ENCODE measurements at regions of chr3 and their contacts with region 1.

Region 1: GRCh38 chr3:111859974-111860859 is 1.2 kb downstream of the PHLDB2 start:
- DNase-seq: peak; percentile 87
- H3K4me3 ChIP-seq: peak overlapping the region; percentile 71 to 80
- H3K27ac ChIP-seq: peak overlapping the region; percentile 90 to 93
- H3K4me1 ChIP-seq: no peaks in the 10 kb centered on the region
- H3K27me3 ChIP-seq: no peaks in the 10 kb centered on the region
- CTCF ChIP-seq: peak in 3 of 4 experiments; percentile 39 to 74 (median 66)
- POLR2A ChIP-seq: peak; percentile 68

Region 2: GRCh38 chr3:111717601-111718000 is 142.6 kb before region 1 on chr3:
- intact Hi-C with region 1: loop called (anchors 1 kb)
- DNase-seq: peak; percentile 86
- H3K4me3 ChIP-seq: no peak overlapping the region
- H3K27ac ChIP-seq: no peak overlapping the region
- H3K4me1 ChIP-seq: no peaks in the 10 kb centered on the region
- H3K27me3 ChIP-seq: no peaks in the 10 kb centered on the region
- CTCF ChIP-seq: peak; percentile 74 to 97 (median 96)
- POLR2A ChIP-seq: no peak

Region 3: DNA sequence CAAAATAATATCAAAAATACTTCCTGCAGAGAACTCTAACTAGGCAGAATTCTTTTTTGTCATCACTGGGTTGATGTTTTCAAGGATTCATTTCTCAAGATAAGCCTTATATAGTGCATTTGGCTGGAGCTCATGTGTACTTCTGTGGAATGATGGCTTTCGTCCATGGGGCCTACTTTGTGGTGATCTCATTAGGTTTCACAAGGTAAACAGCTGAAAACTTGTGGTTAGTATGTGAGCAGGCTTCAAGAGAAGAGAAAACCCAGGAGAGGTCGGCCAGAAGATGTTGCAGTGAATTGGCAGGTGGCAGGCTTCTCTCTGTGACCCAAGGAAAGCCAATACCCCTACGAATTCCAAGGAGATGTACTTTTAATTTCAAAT is 122.5 kb before region 1 on chr3:
- intact Hi-C with region 1: loop called (anchors 5 kb)
- DNase-seq: peak; percentile 88
- H3K4me3 ChIP-seq: no peak overlapping the region
- H3K27ac ChIP-seq: peak overlapping the region; percentile 52 to 64
- H3K4me1 ChIP-seq: peaks cover 12% of the 10 kb centered on the region
- H3K27me3 ChIP-seq: no peaks in the 10 kb centered on the region
- CTCF ChIP-seq: no peak
- POLR2A ChIP-seq: no peak

Region 4: DNA sequence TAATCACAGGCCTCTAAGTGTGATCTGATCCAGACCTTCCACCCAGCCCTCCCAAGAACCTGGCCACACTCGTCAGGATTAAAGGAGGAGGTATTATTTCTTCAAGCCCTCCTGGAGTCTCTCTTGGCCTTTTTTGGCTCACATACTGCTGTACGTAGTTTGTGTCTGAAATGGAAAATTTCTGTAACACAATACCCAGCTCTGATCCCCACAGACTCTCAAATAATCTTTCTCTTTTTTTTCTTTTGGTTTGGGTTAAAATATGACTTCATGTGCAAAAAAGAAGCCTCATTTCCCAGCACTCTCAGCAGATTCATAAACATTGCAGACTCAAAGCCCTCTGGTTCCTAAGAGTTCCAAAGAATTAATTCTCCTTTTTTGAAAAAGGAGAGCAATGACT is 97.7 kb before region 1 on chr3:
- intact Hi-C with region 1: loop called (anchors 2 kb)
- DNase-seq: no peak
- H3K4me3 ChIP-seq: no peak overlapping the region
- H3K27ac ChIP-seq: peak overlapping the region; percentile 70 to 73
- H3K4me1 ChIP-seq: peaks cover 4% of the 10 kb centered on the region
- H3K27me3 ChIP-seq: no peaks in the 10 kb centered on the region
- CTCF ChIP-seq: no peak
- POLR2A ChIP-seq: no peak

Region 5: DNA sequence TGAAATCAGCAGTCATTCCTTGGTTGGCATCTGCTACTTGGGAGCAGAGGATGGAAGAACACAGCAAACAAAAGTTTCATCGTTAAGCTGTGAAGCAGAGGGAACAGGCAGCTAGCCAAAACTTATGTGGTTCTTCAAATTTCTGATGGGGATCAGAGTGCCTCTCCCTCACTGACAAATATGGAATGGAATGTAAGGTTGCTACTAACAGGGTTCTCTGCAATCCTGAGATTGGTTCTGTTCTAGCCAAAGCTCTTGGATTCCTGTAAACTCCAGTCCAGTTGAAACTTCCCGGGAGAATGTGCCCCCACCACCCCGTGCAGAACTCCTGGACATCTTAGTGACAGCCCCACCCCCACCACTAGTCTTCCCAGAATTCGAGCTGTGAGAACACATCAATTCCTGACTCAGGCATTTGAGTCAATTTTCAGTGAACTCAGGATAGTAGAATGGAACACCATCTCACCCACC is 57.1 kb before region 1 on chr3:
- intact Hi-C with region 1: loop called (anchors 5 kb)
- DNase-seq: peak; percentile 61
- H3K4me3 ChIP-seq: no peak overlapping the region
- H3K27ac ChIP-seq: peak overlapping the region; percentile 27 to 48
- H3K4me1 ChIP-seq: no peaks in the 10 kb centered on the region
- H3K27me3 ChIP-seq: no peaks in the 10 kb centered on the region
- CTCF ChIP-seq: no peak
- POLR2A ChIP-seq: no peak

Region 6: GRCh38 chr3:111967651-111968274 is 107.5 kb after region 1 on chr3:
- intact Hi-C with region 1: loop called (anchors 2 kb)
- DNase-seq: peak; percentile 82
- H3K4me3 ChIP-seq: no peak overlapping the region
- H3K27ac ChIP-seq: no peak overlapping the region
- H3K4me1 ChIP-seq: no peaks in the 10 kb centered on the region
- H3K27me3 ChIP-seq: no peaks in the 10 kb centered on the region
- CTCF ChIP-seq: peak; percentile 82 to 89 (median 86)
- POLR2A ChIP-seq: no peak

Region 7: GRCh38 chr3:112489674-112490479 is 629.7 kb after region 1 on chr3:
- intact Hi-C with region 1: no loop called
- DNase-seq: no peak
- H3K4me3 ChIP-seq: no peak overlapping the region
- H3K27ac ChIP-seq: no peak overlapping the region
- H3K4me1 ChIP-seq: no peaks in the 10 kb centered on the region
- H3K27me3 ChIP-seq: no peaks in the 10 kb centered on the region
- CTCF ChIP-seq: no peak
- POLR2A ChIP-seq: no peak

Measured in prostate gland (tissue), 2 donors.